ENCODE measurements at regions of chr11 and their contacts with region 1.

Region 1: DNA sequence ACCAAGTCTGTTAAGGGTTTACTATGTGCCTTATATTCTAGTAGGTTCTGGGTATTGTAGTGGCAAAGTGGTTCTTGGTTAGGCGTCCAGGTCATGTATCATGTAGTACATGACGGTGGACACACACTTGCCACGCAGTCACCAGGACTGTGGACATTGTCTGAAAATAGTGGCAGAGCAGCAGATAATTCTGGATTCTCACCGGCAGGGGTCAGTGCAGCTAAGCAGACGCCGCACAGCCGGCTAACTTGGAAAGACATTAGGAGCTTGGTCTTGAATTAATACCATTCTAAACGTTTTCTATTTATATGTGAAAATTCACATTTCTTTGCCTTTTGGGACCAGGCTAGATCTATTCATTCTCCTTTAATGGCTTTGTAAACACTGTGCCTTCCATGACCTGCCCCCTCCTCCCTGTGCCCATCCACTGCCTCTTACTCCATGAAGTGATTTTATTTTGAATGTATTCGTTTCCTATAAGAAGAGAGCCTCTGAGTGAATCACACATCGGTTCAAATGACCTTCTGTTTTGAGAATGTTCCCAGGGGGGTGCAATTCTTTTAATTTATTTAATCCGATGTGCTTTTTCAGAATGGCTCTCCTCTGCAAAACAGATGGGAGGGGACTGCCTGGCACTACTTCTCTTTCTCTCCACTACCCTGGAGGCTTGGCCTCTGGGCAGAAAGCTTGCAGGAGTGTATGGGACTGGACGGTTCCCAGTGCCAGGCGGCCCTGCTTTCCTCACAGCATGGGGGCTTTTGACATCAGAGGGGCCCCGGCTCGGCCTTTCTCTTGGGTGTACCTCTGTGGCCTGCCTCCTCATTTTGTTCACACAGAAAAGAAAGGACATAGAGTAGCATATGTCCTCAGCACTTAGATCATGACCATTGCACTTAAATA is 378.0 kb downstream of the NTM start:
- H3K4me3 Mint-ChIP-seq: no peak overlapping the region
- H3K27ac Mint-ChIP-seq: no peak overlapping the region
- H3K4me1 Mint-ChIP-seq: no peaks in the 10 kb centered on the region
- H3K27me3 Mint-ChIP-seq: peaks cover 8% of the 10 kb centered on the region

Region 2: GRCh38 chr11:132028380-132029240 is 280.2 kb after region 1 on chr11:
- intact Hi-C with region 1: loop called (anchors 10 kb)
- H3K4me3 Mint-ChIP-seq: no peak overlapping the region
- H3K27ac Mint-ChIP-seq: no peak overlapping the region
- H3K4me1 Mint-ChIP-seq: peaks cover 19% of the 10 kb centered on the region
- H3K27me3 Mint-ChIP-seq: peaks cover 8% of the 10 kb centered on the region

Region 3: DNA sequence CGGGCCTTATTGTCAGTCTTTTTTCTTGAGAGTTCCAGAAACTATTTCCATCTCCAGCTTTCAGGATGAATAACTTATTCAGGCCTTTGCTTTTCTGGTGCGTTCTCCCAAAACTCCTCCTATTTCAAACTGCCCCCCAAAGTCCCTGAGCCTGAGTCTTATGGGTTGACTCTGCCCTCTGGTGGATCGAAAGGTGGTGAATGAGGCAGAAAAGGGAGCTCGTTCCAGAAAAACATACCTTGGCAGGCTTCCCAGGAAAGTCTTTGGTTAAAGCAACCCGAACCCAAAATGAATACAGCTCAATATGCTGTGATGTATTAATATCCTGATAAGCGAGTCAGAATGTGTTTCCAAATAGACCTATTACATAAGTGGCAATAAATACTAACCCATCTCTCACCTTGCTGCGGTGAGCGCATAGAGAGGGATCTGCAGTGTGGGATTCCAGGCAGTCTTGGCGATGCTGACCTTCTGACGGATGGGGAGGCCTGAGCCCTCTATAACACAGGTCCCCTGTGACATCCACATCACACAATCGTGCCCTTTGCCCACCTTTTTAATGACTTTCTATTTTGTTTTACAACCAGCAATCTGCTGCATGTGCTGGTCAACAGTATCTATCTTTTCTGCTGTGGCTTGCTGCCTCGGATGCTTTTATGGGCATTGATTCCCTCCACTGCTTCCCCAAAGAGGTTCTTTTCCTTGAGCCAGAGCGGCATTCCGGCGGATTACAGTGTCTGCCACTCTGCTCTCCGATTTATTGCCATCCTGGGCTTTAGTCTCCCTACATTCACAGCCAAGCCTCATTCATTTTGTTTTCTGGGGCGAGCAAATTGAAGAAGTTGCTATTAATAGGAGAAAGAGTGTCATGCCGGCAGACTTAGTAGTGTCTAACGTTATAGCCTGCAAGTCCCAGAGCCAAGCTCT is 378.8 kb after region 1 on chr11:
- intact Hi-C with region 1: loop called (anchors 2 kb)
- H3K4me3 Mint-ChIP-seq: no peak overlapping the region
- H3K27ac Mint-ChIP-seq: no peak overlapping the region
- H3K4me1 Mint-ChIP-seq: peaks cover 7% of the 10 kb centered on the region
- H3K27me3 Mint-ChIP-seq: peaks cover 36% of the 10 kb centered on the region